Activated CD4-positive, alpha-beta memory T cell treated with anti-CD3 and anti-CD28 coated beads for 36 hours (primary cell): ENCODE measurements at regions of chr3 and their contacts with region 1.

Region 1: GRCh38 chr3:66407611-66408218 is 93.1 kb downstream of the LRIG1 start:
- DNase-seq: peak; percentile 80
- H3K4me3 Mint-ChIP-seq: no peak overlapping the region
- H3K27ac Mint-ChIP-seq: no peak overlapping the region
- H3K4me1 Mint-ChIP-seq: no peaks in the 10 kb centered on the region
- H3K27me3 Mint-ChIP-seq: no peaks in the 10 kb centered on the region

Region 2: DNA sequence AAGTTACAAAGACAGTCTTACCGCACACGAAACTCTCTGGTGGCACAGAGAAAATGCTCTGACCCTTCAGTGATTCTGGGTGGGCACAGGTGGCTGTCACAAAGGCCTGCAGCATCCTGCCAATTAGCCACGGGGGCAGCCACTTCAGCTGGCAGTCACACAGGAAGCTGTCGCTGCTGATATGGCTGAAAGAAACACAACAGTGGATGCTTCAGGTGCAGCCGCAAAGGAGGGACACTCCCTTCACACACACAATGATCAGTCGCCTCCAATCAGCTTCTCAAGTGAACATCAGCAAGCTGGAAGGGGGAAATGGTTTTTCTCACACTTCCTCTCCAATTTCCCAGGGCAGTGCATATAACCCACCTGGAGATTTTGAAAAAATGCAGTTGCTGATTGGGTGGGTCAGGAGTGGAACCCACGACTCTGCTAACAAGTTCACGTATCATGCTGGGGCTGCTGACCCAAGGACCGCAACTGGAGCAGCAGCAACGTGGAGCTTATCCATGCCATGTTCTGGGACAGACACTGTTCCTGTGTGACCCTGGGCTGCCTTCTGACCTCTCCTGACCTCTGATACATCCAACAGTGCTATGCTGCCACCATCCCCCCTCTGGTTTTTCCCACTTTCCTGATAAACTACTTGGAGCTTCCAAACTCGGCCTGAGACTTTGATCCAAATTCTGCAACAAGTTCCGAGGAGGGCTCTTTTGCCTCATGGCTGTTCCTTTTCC is 13.5 kb before region 1 on chr3:
- CTCF ChIA-PET with region 1: interaction called, 18 read pairs
- POLR2A ChIA-PET with region 1: no interaction called
- intact Hi-C with region 1: no loop called
- DNase-seq: peak; percentile 74
- H3K4me3 Mint-ChIP-seq: peak overlapping the region; percentile 73
- H3K27ac Mint-ChIP-seq: peak overlapping the region; percentile 93
- H3K4me1 Mint-ChIP-seq: peaks cover 57% of the 10 kb centered on the region
- H3K27me3 Mint-ChIP-seq: no peaks in the 10 kb centered on the region

Region 3: GRCh38 chr3:66490214-66490613 is 82.5 kb after region 1 on chr3:
- CTCF ChIA-PET with region 1: interaction called, 19 read pairs
- POLR2A ChIA-PET with region 1: no interaction called
- intact Hi-C with region 1: no loop called
- DNase-seq: peak; percentile 54
- H3K4me3 Mint-ChIP-seq: peak overlapping the region; percentile 60
- H3K27ac Mint-ChIP-seq: peak overlapping the region; percentile 91
- H3K4me1 Mint-ChIP-seq: peaks cover 87% of the 10 kb centered on the region
- H3K27me3 Mint-ChIP-seq: no peaks in the 10 kb centered on the region

Region 4: DNA sequence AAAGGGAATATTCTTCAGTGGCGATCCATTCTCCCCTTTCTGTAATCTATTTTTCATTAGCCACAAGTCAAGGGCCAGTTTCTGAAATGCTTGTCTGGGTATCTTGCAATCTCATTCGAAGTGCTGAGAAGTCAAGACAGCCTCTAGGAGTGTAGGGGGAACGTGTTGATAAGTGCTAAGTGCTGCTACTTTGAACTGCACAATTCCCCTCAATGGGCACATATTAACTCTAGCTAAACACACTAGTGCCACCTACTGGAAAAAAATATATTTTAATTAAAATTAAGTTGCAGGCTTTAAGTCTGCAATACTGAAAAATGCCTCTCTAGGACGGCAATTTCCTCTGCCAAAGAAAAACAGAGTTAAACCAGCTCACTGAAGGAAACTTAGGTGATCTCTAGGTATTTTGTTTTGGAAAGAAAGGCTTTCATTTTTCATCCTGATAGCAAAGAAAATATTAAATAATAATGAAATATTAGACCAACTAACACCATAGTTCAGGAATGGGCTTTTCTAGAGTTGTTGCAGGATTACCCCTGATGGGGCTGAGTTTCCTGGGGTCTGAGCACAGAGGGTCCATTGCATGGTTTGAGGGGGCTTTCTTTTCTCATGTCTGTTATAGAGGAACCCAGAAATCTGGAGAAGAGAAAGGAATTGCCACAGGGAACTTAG is 408.5 kb after region 1 on chr3:
- CTCF ChIA-PET with region 1: interaction called, 71 read pairs
- POLR2A ChIA-PET with region 1: no interaction called
- intact Hi-C with region 1: loop called (anchors 1 kb)
- DNase-seq: no peak
- H3K4me3 Mint-ChIP-seq: no peak overlapping the region
- H3K27ac Mint-ChIP-seq: no peak overlapping the region
- H3K4me1 Mint-ChIP-seq: peaks cover 2% of the 10 kb centered on the region
- H3K27me3 Mint-ChIP-seq: peaks cover 1% of the 10 kb centered on the region

Region 5: GRCh38 chr3:67745296-67745695 is 1337.6 kb after region 1 on chr3:
- CTCF ChIA-PET with region 1: no interaction called
- POLR2A ChIA-PET with region 1: no interaction called
- intact Hi-C with region 1: no loop called
- DNase-seq: no peak
- H3K4me3 Mint-ChIP-seq: no peak overlapping the region
- H3K27ac Mint-ChIP-seq: no peak overlapping the region
- H3K4me1 Mint-ChIP-seq: peaks cover 3% of the 10 kb centered on the region
- H3K27me3 Mint-ChIP-seq: no peaks in the 10 kb centered on the region